Astrocyte of the cerebellum (primary cell): ENCODE measurements at regions of chr5 and their contacts with region 1.

Region 1: DNA sequence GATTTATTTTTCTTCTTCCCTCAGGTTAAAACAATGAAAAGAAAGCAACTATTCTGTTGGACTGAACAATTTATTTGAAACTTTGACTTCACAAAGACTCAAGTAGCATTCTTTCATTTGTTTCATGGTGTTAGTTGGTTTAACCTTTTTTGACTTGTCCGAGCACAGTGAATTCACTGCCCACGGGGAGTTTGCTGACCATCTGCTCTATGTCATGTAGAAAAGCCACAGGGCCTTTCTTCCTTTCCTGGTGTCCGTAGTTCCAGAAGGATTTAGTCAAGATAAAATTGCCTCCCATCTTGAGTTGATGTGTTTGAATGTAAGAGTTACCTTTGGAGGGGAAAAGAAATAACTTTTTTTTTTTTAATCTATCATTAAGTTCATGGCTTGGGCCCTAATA is 55.1 kb upstream of the ZNF608 start:
- DNase-seq: no peak
- H3K4me3 ChIP-seq: no peak overlapping the region
- CTCF ChIP-seq: no peak

Region 2: DNA sequence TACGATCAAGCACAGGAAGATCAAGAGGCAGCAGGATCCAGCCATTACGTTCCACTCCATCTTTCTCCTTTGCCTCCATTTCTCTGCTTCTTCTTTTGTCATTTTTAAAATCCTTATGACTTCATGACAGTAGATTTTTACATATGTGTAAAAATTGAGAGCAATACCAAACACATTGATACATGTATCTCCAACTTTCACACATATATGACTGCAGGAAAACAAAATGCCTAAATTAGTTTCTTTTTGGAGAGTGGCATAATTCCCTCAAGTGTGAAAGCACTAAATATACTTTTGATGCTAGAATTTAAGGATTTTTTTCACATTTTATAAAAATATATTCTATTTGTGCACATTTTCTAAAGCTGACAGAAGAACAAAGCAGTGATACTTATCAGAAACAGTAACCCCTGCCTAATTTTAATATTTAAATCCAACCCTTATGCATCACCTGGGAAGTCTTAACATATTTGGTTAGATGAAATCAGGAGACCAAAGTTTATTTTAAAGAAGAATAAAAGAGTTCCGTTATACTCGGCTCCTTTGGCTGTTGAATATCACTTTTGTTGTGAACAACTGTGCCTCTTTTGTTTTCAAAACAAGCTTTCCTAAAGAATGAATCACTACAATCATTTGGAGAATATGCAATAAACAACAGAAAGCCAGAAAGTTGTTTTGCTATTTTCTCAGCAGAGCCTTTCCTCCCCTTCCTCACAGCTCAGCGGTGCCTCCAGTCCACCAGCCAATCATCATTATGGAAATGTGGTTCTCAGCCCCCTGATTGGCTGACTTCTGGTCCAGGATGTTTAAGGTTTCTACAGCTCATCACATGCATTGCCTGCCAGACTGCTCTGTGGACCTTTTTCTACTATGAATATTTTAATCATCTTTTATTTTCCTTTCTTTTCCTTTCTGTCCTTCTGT is 46.2 kb before region 1 on chr5:
- in situ Hi-C with region 1: loop called (anchors 5 kb)
- DNase-seq: no peak
- H3K4me3 ChIP-seq: no peak overlapping the region
- CTCF ChIP-seq: no peak